Natural killer cell (primary cell): ENCODE measurements at regions of chr14 and their contacts with region 1.

Region 1: GRCh38 chr14:60753264-60754119 is 18.9 kb downstream of the MNAT1 start:
- DNase-seq: peak; percentile 45 to 92
- ATAC-seq: peak; percentile 82 to 92 (median 92)
- H3K4me3 ChIP-seq: no peak overlapping the region
- H3K4me3 Mint-ChIP-seq: peak overlapping the region; percentile 68
- H3K27ac ChIP-seq: peak overlapping the region; percentile 68
- H3K27ac Mint-ChIP-seq: peak overlapping the region; percentile 83 to 88
- H3K4me1 ChIP-seq: peaks cover 28% of the 10 kb centered on the region
- H3K4me1 Mint-ChIP-seq: peaks cover 23 to 24% of the 10 kb centered on the region in 2 donors
- H3K27me3 ChIP-seq: no peaks in the 10 kb centered on the region
- H3K27me3 Mint-ChIP-seq: no peaks in the 10 kb centered on the region
- CTCF ChIP-seq: no peak

Region 2: DNA sequence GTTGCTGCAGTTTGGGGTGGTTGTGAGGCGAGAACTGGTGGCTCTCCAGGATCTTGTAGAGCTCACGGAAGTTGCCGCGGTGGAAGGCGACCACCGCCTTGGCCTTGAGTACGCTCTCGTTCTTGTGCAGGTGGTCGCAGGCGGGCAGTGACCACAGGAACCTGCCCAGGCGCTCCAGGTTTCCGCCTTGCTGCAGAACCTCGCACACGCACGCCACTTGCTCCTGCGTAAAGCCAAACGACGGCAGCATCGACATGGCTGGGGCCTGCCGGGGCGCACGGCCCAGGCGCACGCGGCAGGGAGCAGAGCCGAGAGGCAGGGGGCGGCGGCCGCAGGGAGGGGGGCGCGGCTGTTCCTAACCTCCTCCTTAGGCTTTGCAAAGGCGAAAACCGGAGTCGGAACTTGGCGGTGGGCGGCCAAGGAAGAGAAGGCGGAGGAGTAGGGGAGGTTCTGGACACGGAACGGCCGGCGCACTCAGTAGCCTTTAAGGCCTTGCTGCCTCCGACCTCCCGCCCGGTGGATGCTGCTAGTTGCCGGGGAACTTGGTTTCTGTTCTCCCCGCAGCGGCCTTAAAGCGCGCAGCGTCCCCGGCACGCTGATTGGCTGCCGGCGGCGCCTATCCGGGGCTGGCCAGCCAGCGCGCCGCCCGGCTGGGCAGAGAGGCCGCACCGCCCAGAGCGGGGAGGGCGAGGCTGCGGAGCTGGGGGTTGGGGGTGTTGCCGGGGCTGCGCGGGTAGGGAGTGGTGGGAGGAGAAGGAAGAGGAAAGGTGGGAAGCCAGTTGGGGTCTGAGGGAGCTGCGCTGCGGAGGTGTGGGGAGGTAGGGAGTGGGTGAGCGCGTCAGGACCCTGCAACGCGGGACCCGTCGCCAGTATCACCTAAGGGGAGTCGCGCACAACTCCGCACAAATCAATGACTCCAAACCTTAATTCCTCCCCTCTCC is 104.3 kb before region 1 on chr14 and contains the start of gene SIX1:
- intact Hi-C with region 1: no loop called
- DNase-seq: no peak
- ATAC-seq: peak in 2 of 3 donors; percentile 39 to 53
- H3K4me3 ChIP-seq: no peak within 1 kb of the TSS
- H3K4me3 Mint-ChIP-seq: peak within 1 kb of the TSS; percentile 57
- H3K27ac ChIP-seq: no peak within 1 kb of the TSS
- H3K27ac Mint-ChIP-seq: no peak within 1 kb of the TSS
- H3K4me1 ChIP-seq: peaks cover 35% of the 10 kb centered on the region
- H3K4me1 Mint-ChIP-seq: peaks cover 29 to 42% of the 10 kb centered on the region in 2 donors
- H3K27me3 ChIP-seq: peaks cover 69% of the 10 kb centered on the region
- H3K27me3 Mint-ChIP-seq: peaks cover 68 to 86% of the 10 kb centered on the region in 2 donors
- CTCF ChIP-seq: no peak
- total RNA-seq, gene SIX1: not detected

Region 3: GRCh38 chr14:60734465-60735242 is 18.8 kb before region 1 on chr14 and contains the start of gene MNAT1:
- intact Hi-C with region 1: loop called (anchors 2 kb)
- DNase-seq: peak; percentile 68 to 87
- ATAC-seq: peak; percentile 92 to 97 (median 93)
- H3K4me3 ChIP-seq: peak within 1 kb of the TSS; percentile 83
- H3K4me3 Mint-ChIP-seq: peak within 1 kb of the TSS; percentile 99
- H3K27ac ChIP-seq: peak within 1 kb of the TSS; percentile 44
- H3K27ac Mint-ChIP-seq: peak within 1 kb of the TSS; percentile 90 to 97
- H3K4me1 ChIP-seq: no peaks in the 10 kb centered on the region
- H3K4me1 Mint-ChIP-seq: peaks cover 30 to 32% of the 10 kb centered on the region in 2 donors
- H3K27me3 ChIP-seq: peaks cover 10% of the 10 kb centered on the region
- H3K27me3 Mint-ChIP-seq: peaks cover 9 to 16% of the 10 kb centered on the region in 2 donors
- CTCF ChIP-seq: no peak
- total RNA-seq, gene MNAT1: 33.8 to 45.4 (median 34.0) TPM

Region 4: DNA sequence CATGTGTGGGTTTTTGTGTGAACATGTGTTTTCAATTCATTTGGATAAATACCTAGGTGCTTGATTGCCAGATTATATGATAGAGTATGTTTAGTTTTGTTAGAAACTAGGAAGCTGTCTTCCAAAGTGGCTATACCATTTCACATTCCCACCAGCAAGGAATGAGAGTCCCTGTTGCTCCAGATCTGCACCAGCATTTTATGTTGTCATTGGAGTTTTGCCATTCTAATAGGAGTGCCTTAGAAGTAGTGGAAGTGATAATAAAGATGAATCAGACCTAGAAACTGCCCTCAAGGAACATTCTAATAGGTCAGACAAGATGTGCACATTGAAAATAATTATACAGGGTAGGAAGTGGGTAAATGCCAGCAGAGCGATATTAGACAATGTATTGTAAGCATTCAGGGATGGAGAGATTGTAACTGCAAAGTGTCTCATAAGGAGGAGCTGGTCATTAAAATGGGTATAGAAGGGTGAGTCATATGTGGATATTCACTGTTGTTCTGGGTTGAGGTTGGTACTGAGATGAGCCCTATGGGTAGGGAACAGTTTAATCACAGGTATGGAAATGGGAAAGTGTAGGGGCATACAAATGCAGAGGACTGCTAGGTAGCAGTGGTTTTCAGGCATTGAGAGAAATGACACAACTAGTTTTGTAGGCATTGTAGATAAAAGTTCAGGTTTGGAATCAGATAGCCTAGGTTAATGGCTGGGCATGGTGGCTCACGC is 52.5 kb after region 1 on chr14:
- intact Hi-C with region 1: no loop called
- DNase-seq: no peak
- ATAC-seq: no peak
- H3K4me3 ChIP-seq: no peak overlapping the region
- H3K4me3 Mint-ChIP-seq: no peak overlapping the region
- H3K27ac ChIP-seq: no peak overlapping the region
- H3K27ac Mint-ChIP-seq: no peak overlapping the region
- H3K4me1 ChIP-seq: no peaks in the 10 kb centered on the region
- H3K4me1 Mint-ChIP-seq: no peaks in the 10 kb centered on the region
- H3K27me3 ChIP-seq: no peaks in the 10 kb centered on the region
- H3K27me3 Mint-ChIP-seq: no peaks in the 10 kb centered on the region
- CTCF ChIP-seq: no peak

Region 5: GRCh38 chr14:60980811-60981632 is 227.5 kb after region 1 on chr14 and contains the starts of genes SLC38A6 and TRMT5:
- intact Hi-C with region 1: loop called (anchors 2 kb)
- DNase-seq: peak; percentile 90 to 94
- ATAC-seq: peak; percentile 82 to 90 (median 89)
- H3K4me3 ChIP-seq: peak within 1 kb of the TSS; percentile 67
- H3K4me3 Mint-ChIP-seq: no peak within 1 kb of the TSS
- H3K27ac ChIP-seq: peak within 1 kb of the TSS; percentile 75
- H3K27ac Mint-ChIP-seq: no peak within 1 kb of the TSS
- H3K4me1 ChIP-seq: peaks cover 12% of the 10 kb centered on the region
- H3K4me1 Mint-ChIP-seq: peaks cover 0 to 5% of the 10 kb centered on the region in 2 donors
- H3K27me3 ChIP-seq: no peaks in the 10 kb centered on the region
- H3K27me3 Mint-ChIP-seq: no peaks in the 10 kb centered on the region
- CTCF ChIP-seq: no peak
- total RNA-seq, gene SLC38A6: 7.1 to 11.0 (median 8.8) TPM
- total RNA-seq, gene TRMT5: 1.7 to 2.6 (median 1.9) TPM